Psoas muscle (tissue), 8 donors: ENCODE measurements at regions of chr5 and their contacts with region 1.

Region 1: DNA sequence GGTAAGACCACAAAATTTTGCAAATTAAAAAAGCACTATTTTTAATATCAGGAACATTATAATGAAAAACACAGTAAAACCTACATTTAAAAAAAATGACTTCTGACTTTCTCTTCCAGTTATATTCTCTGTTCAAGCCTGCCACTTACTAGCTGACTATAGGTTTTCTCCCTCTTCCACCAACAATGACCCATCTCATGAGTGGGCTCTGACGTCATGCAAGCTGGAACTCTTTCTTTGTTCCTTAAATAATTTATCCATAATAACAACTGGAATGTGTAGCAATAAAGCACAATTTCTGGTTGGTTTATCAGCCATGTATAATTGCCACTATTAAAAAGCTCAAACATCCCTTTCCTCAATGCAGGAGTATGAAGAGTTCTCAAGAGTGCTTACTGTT is 378.1 kb upstream of the FAM174A start:
- DNase-seq: no peak
- ATAC-seq: no peak
- H3K4me3 ChIP-seq: no peak overlapping the region
- H3K27ac ChIP-seq: no peak overlapping the region
- H3K4me1 ChIP-seq: no peaks in the 10 kb centered on the region
- H3K27me3 ChIP-seq: no peaks in the 10 kb centered on the region
- CTCF ChIP-seq: no peak

Region 2: DNA sequence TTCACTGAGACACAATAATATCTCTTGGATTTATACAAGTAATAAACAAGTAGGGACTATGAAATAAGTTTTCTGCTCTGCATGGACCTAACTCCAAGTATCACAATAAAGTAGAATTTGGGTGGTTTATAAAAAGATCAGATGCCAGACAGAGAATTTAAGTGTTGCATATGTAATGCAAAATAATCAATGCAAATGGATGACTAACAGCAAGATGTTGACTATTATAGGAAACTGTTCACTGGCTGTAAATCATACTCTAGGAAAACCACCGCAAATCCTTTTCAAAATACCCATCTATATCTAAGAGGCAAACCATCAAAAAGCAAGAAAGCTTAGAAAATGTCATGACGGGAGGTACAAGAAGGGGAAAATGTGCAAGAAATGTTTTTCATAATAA is 161.7 kb before region 1 on chr5:
- intact Hi-C with region 1: no loop called
- DNase-seq: no peak
- ATAC-seq: no peak
- H3K4me3 ChIP-seq: no peak overlapping the region
- H3K27ac ChIP-seq: no peak overlapping the region
- H3K4me1 ChIP-seq: no peaks in the 10 kb centered on the region
- H3K27me3 ChIP-seq: no peaks in the 10 kb centered on the region
- CTCF ChIP-seq: no peak

Region 3: GRCh38 chr5:100119903-100120302 is 37.2 kb before region 1 on chr5:
- intact Hi-C with region 1: loop called in 1 of 2 experiments (anchors 2 kb)
- DNase-seq: no peak
- ATAC-seq: no peak
- H3K4me3 ChIP-seq: no peak overlapping the region
- H3K27ac ChIP-seq: no peak overlapping the region
- H3K4me1 ChIP-seq: no peaks in the 10 kb centered on the region
- H3K27me3 ChIP-seq: no peaks in the 10 kb centered on the region
- CTCF ChIP-seq: no peak

Region 4: DNA sequence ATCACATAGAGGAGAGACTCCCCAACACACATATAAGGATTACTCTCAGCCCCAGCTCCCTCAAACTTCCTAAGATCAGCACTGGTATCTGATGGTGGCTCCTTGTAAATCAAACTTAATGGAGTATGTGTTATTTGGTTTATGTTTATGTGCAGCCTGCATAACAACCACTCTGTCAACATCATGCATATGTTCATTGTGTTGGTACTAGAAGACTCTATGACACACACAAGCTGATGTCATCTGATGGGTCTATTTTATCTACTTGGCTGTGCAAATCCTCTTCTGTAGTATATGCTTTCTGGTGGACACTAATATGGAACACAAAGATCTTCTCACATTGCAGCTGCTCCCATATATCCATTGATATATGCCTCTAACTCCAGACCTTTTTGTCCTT is 244.1 kb after region 1 on chr5:
- intact Hi-C with region 1: no loop called
- DNase-seq: no peak
- ATAC-seq: no peak
- H3K4me3 ChIP-seq: no peak overlapping the region
- H3K27ac ChIP-seq: no peak overlapping the region
- H3K4me1 ChIP-seq: no peaks in the 10 kb centered on the region
- H3K27me3 ChIP-seq: no peaks in the 10 kb centered on the region
- CTCF ChIP-seq: no peak